ENCODE measurements at regions of chr9 and their contacts with region 1.

Region 1: DNA sequence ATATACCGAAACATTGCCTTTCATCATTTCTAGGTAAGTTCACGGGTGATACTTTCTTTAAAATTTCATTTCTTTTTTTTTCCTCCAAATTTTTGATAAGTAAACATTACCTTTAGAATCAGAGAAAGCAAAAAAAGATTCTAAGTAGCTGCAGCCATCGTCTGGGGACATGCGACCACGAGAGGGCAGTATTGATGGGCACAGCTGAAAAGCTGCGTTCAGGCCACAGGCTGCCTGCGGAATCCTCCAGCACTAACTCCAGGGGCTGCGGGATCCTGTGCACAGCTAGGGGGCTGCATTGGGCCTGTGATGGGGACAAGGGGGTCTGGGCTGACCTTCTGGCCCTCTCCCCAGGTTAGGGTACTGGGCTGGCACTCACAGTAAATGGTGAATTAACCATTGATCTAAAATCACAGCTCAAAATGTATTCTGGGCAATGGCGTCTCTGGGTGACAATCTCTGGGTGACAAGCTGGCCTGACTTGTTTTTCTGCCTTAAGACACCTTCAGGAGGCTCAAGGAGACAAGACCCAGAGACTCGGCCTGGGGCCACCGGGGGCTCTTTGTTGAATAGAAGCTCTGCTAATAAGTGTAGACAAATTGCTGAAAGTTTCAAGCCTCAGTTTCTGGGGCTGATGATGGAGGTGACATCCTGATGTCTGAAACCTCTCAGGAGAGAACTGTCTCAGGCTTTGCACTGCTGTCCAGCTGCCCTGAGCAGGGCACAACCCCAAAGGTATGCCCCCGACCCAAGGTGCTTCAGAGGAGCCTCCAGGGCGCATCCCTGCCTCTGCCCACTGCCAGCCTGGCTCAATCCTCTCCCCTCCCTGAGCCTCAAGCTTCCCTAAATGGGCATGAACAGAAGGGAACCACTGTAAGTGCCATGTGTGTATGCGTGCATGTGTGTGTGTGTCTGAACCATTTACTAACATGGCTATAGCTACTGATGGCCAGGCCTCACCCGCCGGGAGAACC is 44.3 kb upstream of the SARDH start:
- DNase-seq: peak in 1 of 2 experiments; percentile 84
- H3K4me3 ChIP-seq: no peak overlapping the region
- H3K27ac ChIP-seq: no peak overlapping the region
- H3K4me1 ChIP-seq: no peaks in the 10 kb centered on the region
- H3K27me3 ChIP-seq: no peaks in the 10 kb centered on the region
- CTCF ChIP-seq: peak in 2 of 3 experiments; percentile 89; a peak in 3 of 4 replicates
- EP300 ChIP-seq: no peak
- POLR2A ChIP-seq: no peak
- RAD21 ChIP-seq: peak; percentile 79 to 80

Region 2: GRCh38 chr9:133709015-133709611 is 73.3 kb before region 1 on chr9:
- CTCF ChIA-PET with region 1: no interaction called
- POLR2A ChIA-PET with region 1: no interaction called
- DNase-seq: no peak
- H3K4me3 ChIP-seq: no peak overlapping the region
- H3K27ac ChIP-seq: no peak overlapping the region
- H3K4me1 ChIP-seq: peaks cover 0 to 3% (median 0%) of the 10 kb centered on the region in 4 experiments; a peak in 1 of 7 replicates
- H3K27me3 ChIP-seq: no peaks in the 10 kb centered on the region
- CTCF ChIP-seq: peak in 2 of 3 experiments; percentile 19 to 28; a peak in 2 of 4 replicates
- EP300 ChIP-seq: no peak
- POLR2A ChIP-seq: no peak
- RAD21 ChIP-seq: peak; percentile 43 to 61

Region 3: GRCh38 chr9:133750982-133751649 is 31.3 kb before region 1 on chr9:
- CTCF ChIA-PET with region 1: interaction called, 10 read pairs
- POLR2A ChIA-PET with region 1: no interaction called
- DNase-seq: peak in 1 of 2 experiments; percentile 33
- H3K4me3 ChIP-seq: no peak overlapping the region
- H3K27ac ChIP-seq: no peak overlapping the region
- H3K4me1 ChIP-seq: no peaks in the 10 kb centered on the region
- H3K27me3 ChIP-seq: no peaks in the 10 kb centered on the region; a peak in 1 of 7 replicates
- CTCF ChIP-seq: no peak
- EP300 ChIP-seq: no peak
- POLR2A ChIP-seq: no peak
- RAD21 ChIP-seq: no peak

Region 4: GRCh38 chr9:133792721-133793470 is 10.5 kb after region 1 on chr9:
- CTCF ChIA-PET with region 1: interaction called, 19 read pairs
- POLR2A ChIA-PET with region 1: no interaction called
- DNase-seq: peak in 1 of 2 experiments; percentile 90
- H3K4me3 ChIP-seq: no peak overlapping the region
- H3K27ac ChIP-seq: no peak overlapping the region
- H3K4me1 ChIP-seq: peaks cover 0 to 9% (median 3%) of the 10 kb centered on the region in 4 experiments; a peak in 6 of 7 replicates
- H3K27me3 ChIP-seq: no peaks in the 10 kb centered on the region
- CTCF ChIP-seq: peak in 2 of 3 experiments; percentile 90 to 92; a peak in 3 of 4 replicates
- EP300 ChIP-seq: no peak
- POLR2A ChIP-seq: no peak
- RAD21 ChIP-seq: peak; percentile 88 to 91

Region 5: GRCh38 chr9:133825555-133826208 is 43.2 kb after region 1 on chr9:
- CTCF ChIA-PET with region 1: interaction called, 13 read pairs
- POLR2A ChIA-PET with region 1: no interaction called
- DNase-seq: no peak
- H3K4me3 ChIP-seq: no peak overlapping the region
- H3K27ac ChIP-seq: no peak overlapping the region
- H3K4me1 ChIP-seq: peaks cover 0 to 35% (median 29%) of the 10 kb centered on the region in 4 experiments; a peak in 6 of 7 replicates
- H3K27me3 ChIP-seq: no peaks in the 10 kb centered on the region
- CTCF ChIP-seq: no peak
- EP300 ChIP-seq: no peak
- POLR2A ChIP-seq: no peak
- RAD21 ChIP-seq: no peak

Region 6: DNA sequence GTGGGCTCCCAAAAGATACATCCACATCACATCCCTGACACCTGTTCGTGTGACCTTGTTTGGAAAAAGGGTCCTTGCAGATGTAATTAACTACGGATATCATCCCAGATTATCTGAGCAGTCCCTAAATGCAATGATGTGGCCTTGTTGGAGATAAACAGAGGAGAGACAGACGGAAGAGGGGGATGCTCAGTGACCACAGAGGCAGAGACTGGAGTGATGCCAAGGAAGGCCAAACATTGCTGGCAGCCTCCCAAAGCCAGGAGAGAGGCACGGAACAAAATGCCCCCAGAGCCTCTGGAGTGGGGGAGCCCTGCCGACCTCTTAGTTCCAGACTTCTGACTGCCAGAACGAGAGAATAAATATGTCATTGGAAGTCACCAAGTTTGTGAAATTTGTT is 224.7 kb after region 1 on chr9:
- CTCF ChIA-PET with region 1: interaction called, 12 read pairs
- POLR2A ChIA-PET with region 1: no interaction called
- DNase-seq: no peak
- H3K4me3 ChIP-seq: no peak overlapping the region
- H3K27ac ChIP-seq: no peak overlapping the region
- H3K4me1 ChIP-seq: no peaks in the 10 kb centered on the region
- H3K27me3 ChIP-seq: peaks cover 0 to 2% (median 0%) of the 10 kb centered on the region in 4 experiments; a peak in 1 of 7 replicates
- CTCF ChIP-seq: no peak
- EP300 ChIP-seq: no peak
- POLR2A ChIP-seq: no peak
- RAD21 ChIP-seq: no peak